AG04450 (cell line): ENCODE measurements at regions of chr6 and their contacts with region 1.

Region 1: DNA sequence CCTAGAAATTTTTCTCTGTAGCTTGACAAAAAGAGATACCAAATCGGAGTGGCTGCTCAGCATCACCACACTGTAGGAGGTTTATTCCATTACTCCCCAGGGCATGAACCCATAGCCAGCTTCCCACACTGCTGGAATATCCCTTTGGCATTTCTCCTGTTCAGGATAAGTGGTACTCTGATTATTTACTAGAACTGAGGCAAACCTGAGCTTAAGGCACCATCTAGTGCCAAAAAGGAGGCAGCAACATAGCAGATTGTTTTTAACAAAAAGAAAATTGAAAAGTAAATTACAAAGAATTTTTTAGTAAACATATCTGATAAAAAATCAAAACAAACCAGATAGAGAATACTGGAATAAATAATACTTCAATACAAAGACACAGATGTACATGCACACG is 181.7 kb downstream of the WDR27 start:
- DNase-seq: no peak
- H3K4me3 ChIP-seq: no peak overlapping the region
- H3K27ac ChIP-seq: no peak overlapping the region
- H3K27me3 ChIP-seq: no peaks in the 10 kb centered on the region
- CTCF ChIP-seq: peak; percentile 70

Region 2: DNA sequence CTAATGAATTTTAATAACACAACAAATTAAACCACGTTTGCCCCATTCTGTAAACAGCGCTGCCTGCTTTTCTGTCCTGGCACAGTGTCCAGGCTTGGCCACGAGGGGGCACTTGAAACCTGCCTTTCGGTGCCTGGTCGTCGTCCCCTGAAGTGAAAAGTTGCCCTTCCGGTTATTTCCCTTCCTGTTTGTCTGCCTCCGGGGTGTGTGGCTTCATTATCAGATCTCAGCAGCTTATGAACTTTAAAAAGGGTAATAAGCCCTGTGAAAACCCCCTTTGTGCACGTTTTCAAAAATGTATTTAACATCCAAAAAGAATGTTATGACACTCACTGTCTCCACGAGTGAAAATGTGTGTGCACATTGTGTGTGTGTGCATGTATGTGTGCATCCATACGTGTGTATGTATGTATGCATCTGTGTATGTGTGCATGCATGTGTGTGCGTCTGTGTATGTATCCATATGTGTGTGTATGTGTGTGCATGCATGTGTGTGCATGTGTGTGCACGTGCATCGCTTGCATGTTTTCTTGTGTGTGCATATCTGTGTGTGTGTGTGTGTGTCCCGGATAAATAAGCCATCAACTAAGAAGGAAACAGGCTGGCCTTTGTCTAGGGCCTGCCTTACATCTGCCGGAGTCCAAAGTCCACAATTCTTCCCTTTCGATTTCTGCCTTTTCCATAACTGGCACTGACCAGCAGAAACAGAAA is 624.8 kb before region 1 on chr6:
- CTCF ChIA-PET with region 1: interaction called, 34 read pairs
- POLR2A ChIA-PET with region 1: no interaction called
- DNase-seq: peak; percentile 36
- H3K4me3 ChIP-seq: no peak overlapping the region
- H3K27ac ChIP-seq: no peak overlapping the region
- H3K27me3 ChIP-seq: peaks cover 2% of the 10 kb centered on the region
- CTCF ChIP-seq: peak; percentile 97

Region 3: DNA sequence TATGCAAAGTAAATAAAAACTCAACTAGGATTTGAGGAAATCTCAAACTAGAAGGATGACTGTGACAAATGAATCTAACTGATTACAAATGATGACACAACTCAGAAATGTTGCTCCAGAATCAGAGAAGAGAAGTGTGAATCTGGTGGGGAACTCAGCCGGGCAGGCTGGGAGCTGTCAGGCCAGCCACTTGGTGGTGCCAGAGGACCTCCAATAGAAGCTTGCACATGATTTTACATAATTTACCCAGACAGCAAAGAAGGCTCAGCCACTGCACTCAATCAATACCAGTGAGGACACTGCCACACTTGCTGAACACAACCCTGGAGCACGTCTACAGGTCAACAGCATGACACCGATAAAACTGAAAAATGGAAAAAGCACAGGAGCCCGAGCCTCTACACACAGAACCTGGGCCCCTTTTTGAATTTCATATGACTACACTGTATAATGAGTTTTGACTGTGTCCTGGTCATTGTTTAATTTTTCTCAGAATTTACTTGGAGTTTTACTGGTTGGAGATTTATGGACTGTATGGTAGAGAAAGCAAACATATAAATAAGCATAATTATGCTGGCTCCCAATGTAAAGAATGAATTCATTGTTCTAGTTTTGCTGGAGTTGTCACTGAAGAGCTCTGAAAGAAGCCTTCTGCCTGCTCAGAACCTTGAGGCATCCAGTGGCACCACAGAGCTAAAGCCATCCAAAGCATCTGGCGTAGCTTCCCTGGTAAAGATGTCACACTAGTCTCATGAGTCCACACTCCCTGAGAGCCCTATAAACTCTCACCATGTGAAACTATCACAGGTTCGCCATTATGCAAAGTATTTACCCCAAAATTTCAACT is 563.0 kb before region 1 on chr6:
- CTCF ChIA-PET with region 1: interaction called, 47 read pairs
- POLR2A ChIA-PET with region 1: no interaction called
- DNase-seq: peak; percentile 47
- H3K4me3 ChIP-seq: no peak overlapping the region
- H3K27ac ChIP-seq: no peak overlapping the region
- H3K27me3 ChIP-seq: peaks cover 4% of the 10 kb centered on the region
- CTCF ChIP-seq: peak; percentile 91

Region 4: DNA sequence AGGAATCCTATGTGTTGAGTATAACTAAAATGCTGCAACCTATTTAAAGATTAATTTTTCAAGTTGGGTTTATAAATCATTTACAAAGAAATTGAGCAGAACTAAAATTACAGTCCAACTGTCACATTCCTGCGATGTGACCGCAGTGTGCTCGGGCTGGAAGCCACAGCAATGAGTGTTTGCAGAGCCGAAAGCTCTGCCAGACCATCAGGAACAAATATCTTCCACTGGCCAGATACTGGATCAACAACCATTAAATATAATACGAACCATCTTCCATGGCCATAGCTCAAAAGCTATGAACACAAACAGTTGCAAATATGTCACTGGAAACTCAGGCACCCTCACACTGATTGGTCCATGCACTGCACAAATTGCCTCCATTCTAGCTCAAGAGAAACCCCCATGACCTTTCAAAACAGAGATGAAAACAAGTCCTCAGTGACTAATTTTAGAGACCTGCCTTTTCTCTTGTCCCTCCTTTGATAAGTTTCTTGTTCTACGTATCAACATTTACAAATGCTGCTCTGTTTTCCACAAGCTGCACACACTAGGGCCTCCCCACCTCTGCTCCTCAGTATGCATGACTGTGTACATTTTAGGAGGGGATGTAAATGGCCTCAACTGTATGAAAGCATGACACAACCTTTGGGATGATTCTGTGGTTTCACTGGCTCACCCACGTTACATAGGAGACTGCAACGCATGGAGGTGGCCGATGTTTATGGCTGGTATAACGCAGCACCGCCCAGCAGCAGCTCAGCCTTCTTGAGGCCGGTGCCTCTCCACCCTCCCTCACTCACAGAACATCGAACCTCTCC is 10.0 kb after region 1 on chr6:
- CTCF ChIA-PET with region 1: interaction called, 12 read pairs
- POLR2A ChIA-PET with region 1: no interaction called
- DNase-seq: peak; percentile 42
- H3K4me3 ChIP-seq: no peak overlapping the region
- H3K27ac ChIP-seq: peak overlapping the region; percentile 42
- H3K27me3 ChIP-seq: no peaks in the 10 kb centered on the region
- CTCF ChIP-seq: no peak